CD4-positive, alpha-beta memory T cell (primary cell): ENCODE measurements at regions of chr1 and their contacts with region 1.

Region 1: DNA sequence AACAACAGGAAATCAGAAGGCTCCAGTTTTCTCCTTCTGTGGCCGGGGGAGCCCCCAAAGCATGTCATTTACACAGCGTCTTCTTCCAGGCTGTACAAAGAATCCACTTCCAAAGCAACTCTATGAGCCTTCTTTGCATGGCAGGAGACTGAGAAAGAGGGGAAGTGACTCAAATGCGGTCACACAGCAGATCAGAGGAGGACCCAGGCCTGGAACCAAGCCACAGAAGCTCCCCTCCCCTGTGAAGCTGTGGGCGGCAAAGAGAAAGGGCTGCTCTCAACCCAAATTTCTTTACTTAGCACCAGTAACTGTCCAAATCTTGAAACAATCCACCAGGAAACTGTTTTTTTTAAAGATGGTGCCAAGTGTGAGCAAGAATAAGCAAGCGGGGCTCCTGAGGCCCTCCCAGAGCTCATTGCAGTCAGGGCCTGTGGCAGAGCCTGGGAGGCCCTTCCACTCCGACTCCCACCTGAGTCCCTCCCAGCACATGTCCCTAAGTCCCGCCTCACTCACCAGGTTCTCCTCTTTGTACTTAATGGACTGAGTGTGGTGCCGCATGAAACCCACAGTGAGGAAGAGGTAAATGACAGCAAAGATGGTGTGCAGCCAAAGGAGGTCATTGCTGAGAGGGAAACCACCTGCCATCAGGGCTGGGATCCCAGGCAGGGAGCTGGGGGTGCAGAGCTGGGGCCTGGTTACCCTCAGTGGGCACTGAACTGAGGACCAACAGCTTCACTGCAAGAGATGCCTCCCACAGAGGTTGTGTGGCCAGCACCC is 15.9 kb downstream of the TMEM63A start:
- DNase-seq: peak; percentile 69 to 89 (median 73)
- H3K4me3 ChIP-seq: no peak overlapping the region
- H3K4me3 Mint-ChIP-seq: peak overlapping the region in 7 of 8 donors; percentile 58 to 85 (median 76)
- H3K27ac ChIP-seq: peak overlapping the region; percentile 52
- H3K27ac Mint-ChIP-seq: peak overlapping the region; percentile 85 to 95 (median 90)
- H3K4me1 ChIP-seq: peaks cover 42% of the 10 kb centered on the region
- H3K4me1 Mint-ChIP-seq: peaks cover 31 to 60% (median 44%) of the 10 kb centered on the region in 4 donors
- H3K27me3 ChIP-seq: no peaks in the 10 kb centered on the region
- H3K27me3 Mint-ChIP-seq: no peaks in the 10 kb centered on the region

Region 2: DNA sequence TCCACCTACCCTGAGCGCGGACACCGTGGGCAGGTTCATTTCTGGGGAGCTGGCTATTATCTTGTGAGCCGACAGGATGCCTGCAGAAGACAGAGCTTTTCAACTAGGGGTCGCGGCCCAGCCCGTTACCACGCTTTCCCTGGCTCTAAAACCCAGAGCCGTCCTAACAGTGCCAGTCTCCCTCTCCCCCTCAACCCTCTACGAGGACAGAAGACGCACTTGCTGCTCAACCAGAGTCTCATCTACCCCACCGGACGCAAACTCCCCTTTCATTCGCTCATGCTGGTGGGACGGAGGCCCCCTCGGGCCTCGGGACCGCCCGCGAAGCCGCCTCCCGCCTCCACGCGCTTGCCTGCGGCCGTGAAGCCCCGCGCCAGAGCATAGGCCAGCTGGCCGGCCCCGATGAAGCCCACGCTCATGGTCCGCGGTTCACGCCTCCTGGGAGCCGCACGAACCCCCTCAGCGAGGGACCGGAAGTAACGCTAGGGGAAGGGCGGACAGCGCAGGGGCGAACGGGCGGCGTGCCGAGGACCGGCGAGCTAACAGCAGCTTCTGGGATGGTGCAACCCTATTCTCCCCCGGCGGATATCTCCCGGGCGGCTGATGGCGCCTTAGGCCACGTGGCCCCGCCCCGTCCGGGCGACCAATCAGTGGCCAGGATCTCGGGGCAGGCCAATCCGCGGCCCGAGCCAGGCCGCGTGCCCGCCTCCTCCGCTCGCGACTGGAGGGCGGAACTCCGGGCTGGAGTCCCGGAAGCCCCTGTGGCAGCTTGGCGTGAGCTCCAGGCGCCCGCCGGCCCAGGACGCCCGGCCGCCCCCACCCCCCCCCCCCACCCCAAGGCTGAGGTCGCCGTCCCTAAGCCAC is 57.7 kb after region 1 on chr1 and contains the start of gene PYCR2:
- CTCF ChIA-PET with region 1: no interaction called
- POLR2A ChIA-PET with region 1: interaction called, 14 read pairs
- intact Hi-C with region 1: no loop called
- DNase-seq: peak; percentile 93 to 96 (median 95)
- H3K4me3 ChIP-seq: peak within 1 kb of the TSS; percentile 94 to 96
- H3K4me3 Mint-ChIP-seq: peak within 1 kb of the TSS; percentile 90 to 97 (median 94)
- H3K27ac ChIP-seq: peak within 1 kb of the TSS; percentile 85
- H3K27ac Mint-ChIP-seq: peak within 1 kb of the TSS; percentile 90 to 97 (median 95)
- H3K4me1 ChIP-seq: peaks cover 68% of the 10 kb centered on the region
- H3K4me1 Mint-ChIP-seq: peaks cover 13 to 52% (median 28%) of the 10 kb centered on the region in 4 donors
- H3K27me3 ChIP-seq: no peaks in the 10 kb centered on the region
- H3K27me3 Mint-ChIP-seq: no peaks in the 10 kb centered on the region
- total RNA-seq, gene PYCR2: 102 to 116 TPM